ENCODE measurements at regions of chr2 and their contacts with region 1.

Region 1: GRCh38 chr2:11778923-11779757 is 32.7 kb downstream of the LPIN1 start:
- DNase-seq: peak; percentile 79 to 84 (median 81)
- H3K4me3 ChIP-seq: peak overlapping the region in 1 of 2 donors; percentile 19
- H3K4me3 Mint-ChIP-seq: peak overlapping the region; percentile 59 to 84 (median 72)
- H3K27ac ChIP-seq: peak overlapping the region; percentile 52
- H3K27ac Mint-ChIP-seq: peak overlapping the region; percentile 64 to 90 (median 87)
- H3K4me1 ChIP-seq: peaks cover 34% of the 10 kb centered on the region
- H3K4me1 Mint-ChIP-seq: peaks cover 32 to 48% (median 39%) of the 10 kb centered on the region in 4 donors
- H3K27me3 ChIP-seq: no peaks in the 10 kb centered on the region
- H3K27me3 Mint-ChIP-seq: no peaks in the 10 kb centered on the region

Region 2: GRCh38 chr2:11589316-11589940 is 189.7 kb before region 1 on chr2:
- CTCF ChIA-PET with region 1: no interaction called
- POLR2A ChIA-PET with region 1: no interaction called
- intact Hi-C with region 1: no loop called
- DNase-seq: no peak
- H3K4me3 ChIP-seq: no peak overlapping the region
- H3K4me3 Mint-ChIP-seq: no peak overlapping the region
- H3K27ac ChIP-seq: no peak overlapping the region
- H3K27ac Mint-ChIP-seq: no peak overlapping the region
- H3K4me1 ChIP-seq: no peaks in the 10 kb centered on the region
- H3K4me1 Mint-ChIP-seq: no peaks in the 10 kb centered on the region
- H3K27me3 ChIP-seq: no peaks in the 10 kb centered on the region
- H3K27me3 Mint-ChIP-seq: peaks cover 6 to 8% of the 10 kb centered on the region in 2 donors

Region 3: DNA sequence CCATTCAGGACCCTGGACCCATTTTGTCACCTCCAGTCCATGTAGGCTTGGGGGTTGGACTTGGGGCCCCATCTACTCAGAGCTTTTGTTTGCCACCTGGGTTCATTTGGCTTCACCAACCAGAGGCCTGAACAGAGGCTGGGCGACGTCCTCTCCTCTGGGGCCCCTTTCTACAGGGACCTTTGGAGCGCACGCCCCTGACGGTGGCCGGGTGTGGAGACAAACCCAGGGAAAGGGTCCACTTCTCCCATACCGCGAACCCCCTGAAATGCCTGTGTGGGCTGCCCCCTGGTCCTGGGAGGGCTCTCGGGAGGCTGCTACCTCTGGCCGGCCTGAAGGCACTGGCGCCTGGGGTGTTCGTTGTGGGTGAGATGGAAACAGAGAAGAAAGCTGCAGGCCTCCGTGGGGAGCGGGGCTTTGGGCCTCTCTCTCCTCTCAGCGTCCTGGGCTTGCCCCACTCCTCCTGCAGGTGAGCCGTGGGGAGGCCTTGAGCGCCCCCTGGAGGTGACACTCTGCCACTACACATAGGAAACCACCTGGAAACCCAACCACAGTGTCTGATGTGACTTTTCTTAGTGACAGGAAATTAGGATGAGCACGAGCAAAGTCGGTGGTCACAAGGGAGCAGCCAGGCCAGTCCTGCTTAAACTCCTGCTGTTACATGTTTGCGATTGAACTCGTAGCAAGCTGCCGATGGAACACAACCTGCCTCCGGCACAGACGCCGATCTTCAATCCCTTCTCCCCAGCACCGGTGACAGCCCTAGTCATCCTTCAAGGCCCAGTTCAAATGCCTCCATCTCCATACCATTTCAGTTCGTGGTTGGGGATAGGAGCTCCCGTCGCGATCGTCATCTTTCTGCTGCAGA is 97.2 kb before region 1 on chr2:
- CTCF ChIA-PET with region 1: interaction called, 476 read pairs
- POLR2A ChIA-PET with region 1: no interaction called
- intact Hi-C with region 1: no loop called
- DNase-seq: peak; percentile 42 to 56 (median 46)
- H3K4me3 ChIP-seq: no peak overlapping the region
- H3K4me3 Mint-ChIP-seq: peak overlapping the region in 1 of 8 donors; percentile 32
- H3K27ac ChIP-seq: no peak overlapping the region
- H3K27ac Mint-ChIP-seq: peak overlapping the region in 1 of 7 donors; percentile 10
- H3K4me1 ChIP-seq: peaks cover 3% of the 10 kb centered on the region
- H3K4me1 Mint-ChIP-seq: peaks cover 0 to 7% (median 5%) of the 10 kb centered on the region in 4 donors
- H3K27me3 ChIP-seq: no peaks in the 10 kb centered on the region
- H3K27me3 Mint-ChIP-seq: peaks cover 16 to 19% of the 10 kb centered on the region in 2 donors

Region 4: DNA sequence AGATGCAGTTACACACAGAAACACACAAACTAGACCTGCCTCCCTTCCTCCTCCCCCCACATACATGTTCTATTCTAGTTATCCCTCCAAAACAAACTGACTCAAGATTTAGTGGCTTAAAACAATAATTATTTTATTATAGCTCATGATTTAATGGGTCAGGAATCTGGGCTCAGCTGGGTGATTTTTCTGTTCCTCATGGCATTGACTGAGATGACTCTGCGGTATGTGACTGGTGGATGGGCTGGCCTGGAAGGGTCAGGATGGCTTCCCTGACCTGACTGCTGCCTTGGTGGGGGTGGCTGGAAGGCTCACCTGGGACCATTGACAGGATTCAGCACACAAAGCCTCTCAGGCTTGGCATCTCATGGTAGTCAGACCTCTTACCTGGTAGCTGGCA is 75.4 kb before region 1 on chr2:
- CTCF ChIA-PET with region 1: interaction called, 476 read pairs
- POLR2A ChIA-PET with region 1: no interaction called
- intact Hi-C with region 1: no loop called
- DNase-seq: no peak
- H3K4me3 ChIP-seq: no peak overlapping the region
- H3K4me3 Mint-ChIP-seq: no peak overlapping the region
- H3K27ac ChIP-seq: no peak overlapping the region
- H3K27ac Mint-ChIP-seq: no peak overlapping the region
- H3K4me1 ChIP-seq: no peaks in the 10 kb centered on the region
- H3K4me1 Mint-ChIP-seq: no peaks in the 10 kb centered on the region
- H3K27me3 ChIP-seq: no peaks in the 10 kb centered on the region
- H3K27me3 Mint-ChIP-seq: peaks cover 1 to 2% of the 10 kb centered on the region in 2 donors

Region 5: DNA sequence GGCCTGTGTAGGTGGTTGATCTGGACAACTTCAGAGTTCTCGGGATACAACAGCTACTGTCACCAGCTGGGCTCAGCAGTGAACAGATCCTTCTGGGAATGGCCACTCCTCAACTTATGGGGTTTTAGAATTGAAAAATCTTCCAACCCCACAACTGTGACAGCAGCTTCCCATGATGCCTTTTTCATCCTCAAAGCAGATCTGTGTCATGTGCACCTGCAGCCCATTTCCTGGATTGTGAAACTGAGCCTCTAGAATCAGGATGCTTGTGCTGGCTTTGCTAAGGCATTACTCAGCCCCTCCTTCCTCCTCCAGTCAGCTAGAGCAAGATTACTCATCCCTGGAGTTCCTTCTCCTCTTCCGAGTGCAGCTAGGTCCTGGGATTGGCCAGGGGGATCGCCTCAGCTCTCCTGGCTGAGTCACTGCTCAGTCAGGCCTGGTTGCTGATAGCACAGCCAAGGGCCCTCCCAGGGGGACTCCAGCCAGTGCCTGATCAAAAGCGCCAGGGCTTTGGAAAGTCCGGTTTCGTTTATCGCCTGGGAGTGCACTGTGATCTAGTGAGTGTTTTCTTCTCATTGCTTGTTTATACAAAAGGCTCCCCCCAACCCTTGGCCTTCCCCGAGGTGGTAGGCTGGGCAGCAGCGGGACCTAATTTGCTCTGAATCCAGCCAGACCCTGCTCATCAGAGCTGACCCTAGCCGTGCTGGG is 35.1 kb before region 1 on chr2:
- CTCF ChIA-PET with region 1: interaction called, 258 read pairs
- POLR2A ChIA-PET with region 1: interaction called, 19 read pairs
- intact Hi-C with region 1: loop called (anchors 1 kb)
- DNase-seq: peak; percentile 59 to 91 (median 65)
- H3K4me3 ChIP-seq: peak overlapping the region; percentile 45 to 61
- H3K4me3 Mint-ChIP-seq: peak overlapping the region; percentile 49 to 92 (median 81)
- H3K27ac ChIP-seq: peak overlapping the region; percentile 48
- H3K27ac Mint-ChIP-seq: peak overlapping the region; percentile 71 to 98 (median 94)
- H3K4me1 ChIP-seq: peaks cover 56% of the 10 kb centered on the region
- H3K4me1 Mint-ChIP-seq: peaks cover 37 to 55% (median 44%) of the 10 kb centered on the region in 4 donors
- H3K27me3 ChIP-seq: no peaks in the 10 kb centered on the region
- H3K27me3 Mint-ChIP-seq: no peaks in the 10 kb centered on the region

Region 6: DNA sequence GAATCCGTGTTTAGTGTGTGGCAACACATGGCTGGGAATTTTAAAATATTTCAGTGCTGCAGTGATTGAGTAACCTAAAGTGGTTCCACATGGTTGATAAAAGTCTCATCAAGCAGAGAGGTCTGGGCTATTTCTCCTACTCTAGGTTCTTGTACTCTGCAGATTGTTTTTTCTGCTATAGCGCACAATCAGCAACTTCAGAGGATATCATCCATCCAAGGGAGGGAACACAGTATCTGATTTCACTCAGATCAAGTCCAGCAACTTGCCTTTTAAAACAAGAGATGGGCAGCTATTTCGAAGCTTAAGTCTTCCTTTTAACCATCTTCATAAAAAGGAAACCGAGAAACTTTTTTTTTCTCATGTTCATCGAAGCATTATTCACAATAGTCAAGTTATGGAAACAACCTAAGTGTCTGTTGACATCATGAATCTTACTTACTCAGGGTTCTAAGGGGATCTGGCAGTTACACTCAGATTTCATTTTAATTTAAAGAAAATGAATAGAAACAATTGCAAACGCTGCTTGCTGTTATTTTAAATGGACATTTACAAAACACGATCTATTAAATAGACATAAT is 764.9 kb after region 1 on chr2:
- CTCF ChIA-PET with region 1: no interaction called
- POLR2A ChIA-PET with region 1: no interaction called
- intact Hi-C with region 1: no loop called
- DNase-seq: no peak
- H3K4me3 ChIP-seq: no peak overlapping the region
- H3K4me3 Mint-ChIP-seq: no peak overlapping the region
- H3K27ac ChIP-seq: no peak overlapping the region
- H3K27ac Mint-ChIP-seq: no peak overlapping the region
- H3K4me1 ChIP-seq: no peaks in the 10 kb centered on the region
- H3K4me1 Mint-ChIP-seq: peaks cover 0 to 21% (median 8%) of the 10 kb centered on the region in 4 donors
- H3K27me3 ChIP-seq: no peaks in the 10 kb centered on the region
- H3K27me3 Mint-ChIP-seq: no peaks in the 10 kb centered on the region